Sciatic nerve (tissue), 2 donors: ENCODE measurements at regions of chr1 and their contacts with region 1.

Region 1: DNA sequence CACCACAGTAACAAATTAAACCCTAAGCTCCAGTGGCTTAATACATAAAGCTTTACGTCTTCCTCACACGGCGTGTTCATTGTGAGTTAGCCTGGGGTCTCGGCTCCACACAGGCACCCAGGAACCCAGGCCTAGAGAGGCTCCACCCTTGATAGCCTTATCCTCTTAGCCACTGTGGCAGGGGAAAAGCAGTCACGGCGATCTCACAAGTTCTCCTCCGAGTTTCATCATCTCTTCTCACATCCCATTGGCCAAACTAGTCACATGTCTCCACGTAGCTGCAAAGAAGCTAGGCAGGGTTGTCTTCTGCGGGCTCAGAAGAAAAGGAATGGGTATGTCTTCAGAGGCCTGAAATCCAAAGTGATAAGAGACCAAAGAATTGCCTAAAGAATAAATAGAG is 122.3 kb upstream of the GRIK3 start:
- DNase-seq: no peak
- ATAC-seq: no peak

Region 2: DNA sequence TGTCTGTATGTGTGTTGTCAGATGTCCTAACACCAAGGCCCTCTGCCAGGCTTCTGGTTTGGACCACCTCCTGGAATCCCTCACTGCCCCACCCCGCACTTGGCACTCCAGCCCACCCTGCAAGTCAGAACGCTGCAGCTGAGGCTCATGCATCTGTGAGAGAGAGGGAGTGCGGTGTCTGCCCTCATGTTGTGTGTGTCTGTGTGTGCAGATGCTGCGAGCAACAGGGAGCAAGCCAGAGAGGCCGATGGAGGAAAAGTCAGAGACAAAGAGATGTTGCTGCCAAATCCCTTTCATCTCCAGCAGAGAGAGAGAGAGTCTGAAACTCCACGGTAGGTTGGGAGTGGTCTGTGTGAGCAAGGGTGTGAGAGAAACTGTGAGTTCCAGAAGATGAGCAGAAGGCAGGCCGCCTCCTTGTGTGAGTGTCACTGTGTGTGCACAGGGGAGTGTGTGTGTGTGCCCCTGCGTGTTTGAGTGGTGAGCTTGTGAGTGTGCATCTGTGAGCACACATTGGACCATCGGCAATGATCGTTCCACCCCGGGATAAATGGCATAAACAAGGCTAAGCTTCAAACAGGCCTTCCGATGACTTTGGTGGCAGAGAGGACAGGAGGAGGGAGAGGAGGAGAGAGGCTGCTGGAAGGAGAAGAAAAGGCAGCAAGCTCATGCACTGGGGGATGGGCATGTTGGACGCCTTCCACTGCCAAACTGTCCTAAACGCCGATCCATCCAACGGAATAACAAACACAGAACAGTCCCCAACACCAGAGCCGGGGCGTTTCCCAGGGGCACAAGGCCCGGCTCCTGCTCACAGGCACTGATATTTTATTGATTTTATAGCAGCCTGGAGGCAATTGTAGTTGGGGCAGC is 23.1 kb before region 1 on chr1:
- intact Hi-C with region 1: loop called (anchors 1 kb)
- DNase-seq: no peak
- ATAC-seq: no peak